Activated B cell treated with CpG ODN at 0.5 μM for 24 hours (primary cell): ENCODE measurements at regions of chr6 and their contacts with region 1.

Region 1: DNA sequence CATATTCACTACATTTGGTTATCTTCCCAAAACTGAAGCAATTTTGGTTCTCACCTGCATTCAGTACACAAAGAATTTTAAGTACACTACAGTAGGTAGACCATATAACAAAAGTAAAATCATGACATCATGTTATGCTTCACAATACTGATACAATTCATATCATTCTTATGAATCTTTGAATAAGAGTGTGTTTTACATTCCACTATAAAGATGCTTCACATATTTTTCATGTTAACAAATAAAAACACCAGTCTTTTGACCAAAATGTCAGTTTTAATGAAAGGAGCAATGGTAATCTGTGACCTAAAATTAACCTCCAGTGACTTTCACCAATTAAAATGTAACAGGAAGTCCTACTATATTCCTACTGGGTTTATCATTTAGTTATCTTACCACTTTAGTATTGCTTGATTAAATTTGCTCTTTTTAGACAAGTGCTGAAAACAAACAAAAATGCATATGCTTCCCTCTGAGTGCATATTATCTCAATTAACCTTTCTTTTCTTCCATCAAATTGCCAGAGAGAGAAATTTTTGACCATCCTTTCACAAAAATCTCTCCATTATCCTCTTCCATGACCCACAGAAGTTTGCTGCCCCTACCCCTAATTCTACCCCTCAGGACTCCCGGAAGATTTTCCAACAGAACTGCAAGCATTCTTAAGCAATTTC is 49.3 kb downstream of the PHIP start:
- DNase-seq: no peak
- ATAC-seq: no peak
- H3K4me3 Mint-ChIP-seq: no peak overlapping the region
- H3K27ac Mint-ChIP-seq: no peak overlapping the region
- H3K4me1 Mint-ChIP-seq: peaks cover 14% of the 10 kb centered on the region
- H3K27me3 Mint-ChIP-seq: no peaks in the 10 kb centered on the region
- CTCF ChIP-seq: no peak

Region 2: DNA sequence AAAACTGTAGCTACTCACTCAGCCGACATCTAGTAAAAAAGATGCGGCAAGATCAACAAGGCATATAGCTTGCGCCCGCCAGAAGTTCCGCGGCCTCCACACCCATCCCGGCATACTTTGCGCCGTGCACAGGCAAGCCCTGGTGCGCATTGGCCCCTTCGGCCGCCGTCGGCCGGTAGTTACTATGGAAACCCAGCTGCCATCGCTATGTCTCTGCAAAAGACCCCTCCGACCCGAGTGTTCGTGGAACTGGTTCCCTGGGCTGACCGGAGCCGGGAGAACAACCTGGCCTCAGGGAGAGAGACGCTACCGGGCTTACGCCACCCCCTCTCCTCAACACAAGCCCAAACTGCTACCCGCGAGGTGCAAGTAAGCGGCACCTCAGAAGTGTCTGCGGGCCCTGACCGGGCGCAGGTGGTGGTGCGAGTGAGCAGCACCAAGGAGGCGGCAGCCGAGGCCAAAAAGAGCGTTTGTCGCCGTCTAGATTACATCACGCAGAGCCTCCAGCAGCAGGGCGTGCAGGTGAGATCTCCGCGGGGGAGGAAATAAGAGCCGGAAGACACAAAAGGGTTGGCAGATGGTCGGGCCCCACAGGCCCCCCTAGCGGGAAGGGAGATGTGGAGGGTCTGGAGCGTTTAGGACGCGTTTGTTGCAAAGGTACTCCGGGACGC is 161.3 kb before region 1 on chr6 and contains the start of gene IRAK1BP1:
- CTCF ChIA-PET with region 1: no interaction called
- POLR2A ChIA-PET with region 1: no interaction called
- intact Hi-C with region 1: no loop called
- DNase-seq: peak; percentile 75
- ATAC-seq: peak; percentile 96
- H3K4me3 Mint-ChIP-seq: peak within 1 kb of the TSS; percentile 99
- H3K27ac Mint-ChIP-seq: peak within 1 kb of the TSS; percentile 98
- H3K4me1 Mint-ChIP-seq: peaks cover 20% of the 10 kb centered on the region
- H3K27me3 Mint-ChIP-seq: no peaks in the 10 kb centered on the region
- CTCF ChIP-seq: no peak
- total RNA-seq, gene IRAK1BP1: 2.4 and 3.0 TPM in 2 replicates

Region 3: GRCh38 chr6:78954740-78955139 is 74.0 kb before region 1 on chr6:
- CTCF ChIA-PET with region 1: no interaction called
- POLR2A ChIA-PET with region 1: interaction called, 10 read pairs
- intact Hi-C with region 1: no loop called
- DNase-seq: no peak
- ATAC-seq: no peak
- H3K4me3 Mint-ChIP-seq: no peak overlapping the region
- H3K27ac Mint-ChIP-seq: no peak overlapping the region
- H3K4me1 Mint-ChIP-seq: no peaks in the 10 kb centered on the region
- H3K27me3 Mint-ChIP-seq: no peaks in the 10 kb centered on the region
- CTCF ChIP-seq: no peak

Region 4: GRCh38 chr6:79056226-79056625 is 27.4 kb after region 1 on chr6:
- CTCF ChIA-PET with region 1: no interaction called
- POLR2A ChIA-PET with region 1: no interaction called
- intact Hi-C with region 1: loop called (anchors 5 kb)
- DNase-seq: no peak
- ATAC-seq: no peak
- H3K4me3 Mint-ChIP-seq: no peak overlapping the region
- H3K27ac Mint-ChIP-seq: no peak overlapping the region
- H3K4me1 Mint-ChIP-seq: peaks cover 7% of the 10 kb centered on the region
- H3K27me3 Mint-ChIP-seq: no peaks in the 10 kb centered on the region
- CTCF ChIP-seq: no peak